CD8-positive, alpha-beta T cell (primary cell): ENCODE measurements at regions of chr19 and their contacts with region 1.

Region 1: DNA sequence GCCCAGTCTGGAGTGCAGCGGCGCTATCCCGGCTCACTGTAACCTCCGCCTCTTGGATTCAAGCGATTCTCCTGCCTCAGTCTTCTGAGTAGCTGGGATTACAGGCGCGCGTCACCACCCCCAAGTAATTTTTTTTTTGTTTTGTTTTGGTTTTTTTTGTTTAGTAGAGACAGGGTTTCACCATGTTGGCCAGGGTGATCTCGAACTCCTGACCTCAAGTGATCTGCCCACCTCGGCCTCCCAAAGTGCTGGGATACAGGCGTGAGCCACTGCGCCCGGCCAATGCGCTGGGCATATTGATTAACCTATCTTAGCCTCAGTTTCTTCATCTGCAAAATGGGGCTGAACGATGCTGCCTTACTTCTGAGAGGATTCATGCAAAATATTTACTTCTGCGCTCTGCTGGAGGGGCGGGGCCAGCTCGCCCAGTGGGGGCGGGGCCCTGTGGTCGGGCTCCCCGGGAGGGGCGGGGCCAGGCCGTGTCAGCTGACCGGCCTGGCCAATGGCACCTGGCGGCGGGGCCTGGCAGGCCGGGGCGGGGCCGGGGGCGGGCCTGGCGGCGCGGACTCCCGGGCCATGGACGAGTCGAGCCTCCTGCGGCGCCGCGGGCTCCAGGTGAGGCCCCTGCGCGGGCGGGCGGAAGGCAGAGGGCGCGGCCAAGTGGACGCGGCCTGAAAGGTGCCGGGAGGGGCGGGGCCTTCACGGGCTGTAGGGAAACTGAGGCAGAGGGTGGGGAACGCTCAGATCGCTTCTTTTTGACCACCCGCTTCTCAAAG is at the start of gene MAST3:
- DNase-seq: peak; percentile 84 to 95 (median 92)
- ATAC-seq: peak; percentile 96
- H3K4me3 ChIP-seq: peak within 1 kb of the TSS; percentile 63 to 66
- H3K4me3 Mint-ChIP-seq: peak within 1 kb of the TSS; percentile 89
- H3K27ac ChIP-seq: peak within 1 kb of the TSS; percentile 26 to 40
- H3K27ac Mint-ChIP-seq: peak within 1 kb of the TSS; percentile 72
- H3K4me1 ChIP-seq: peaks cover 35% of the 10 kb centered on the region
- H3K4me1 Mint-ChIP-seq: peaks cover 47% of the 10 kb centered on the region
- H3K27me3 ChIP-seq: no peaks in the 10 kb centered on the region
- H3K27me3 Mint-ChIP-seq: no peaks in the 10 kb centered on the region
- CTCF ChIP-seq: no peak
- total RNA-seq, gene MAST3: 13.7 to 15.2 TPM

Region 2: GRCh38 chr19:18109733-18110595 is 12.6 kb after region 1 on chr19:
- CTCF ChIA-PET with region 1: interaction called, 14 read pairs
- POLR2A ChIA-PET with region 1: interaction called, 18 read pairs
- intact Hi-C with region 1: no loop called
- DNase-seq: peak in 6 of 9 experiments; percentile 48 to 72 (median 58)
- ATAC-seq: peak; percentile 79
- H3K4me3 ChIP-seq: peak overlapping the region; percentile 74
- H3K4me3 Mint-ChIP-seq: peak overlapping the region; percentile 82
- H3K27ac ChIP-seq: peak overlapping the region; percentile 41 to 53
- H3K27ac Mint-ChIP-seq: peak overlapping the region; percentile 86
- H3K4me1 ChIP-seq: peaks cover 21% of the 10 kb centered on the region
- H3K4me1 Mint-ChIP-seq: peaks cover 18% of the 10 kb centered on the region
- H3K27me3 ChIP-seq: no peaks in the 10 kb centered on the region
- H3K27me3 Mint-ChIP-seq: no peaks in the 10 kb centered on the region
- CTCF ChIP-seq: no peak

Region 3: DNA sequence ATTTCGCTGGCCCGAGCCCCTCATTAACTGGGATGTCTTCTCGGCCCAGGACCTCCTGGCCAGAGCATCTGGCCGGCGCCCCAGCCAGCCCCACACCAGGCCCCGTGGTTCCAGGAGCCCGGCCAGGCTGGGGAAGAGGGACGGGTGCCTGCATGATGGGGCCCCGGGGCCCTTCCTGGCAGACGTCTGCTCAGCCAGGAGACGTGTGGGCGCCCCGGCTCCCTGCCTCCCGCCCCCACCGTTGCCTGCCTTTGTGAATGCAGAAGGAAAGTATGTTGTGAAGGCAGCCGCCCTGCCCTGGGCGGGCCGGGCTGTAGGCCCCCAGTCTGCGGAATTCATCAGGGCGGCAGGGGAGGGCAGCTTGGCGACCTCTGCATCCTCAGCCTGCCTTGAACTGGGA is 698.1 kb after region 1 on chr19:
- CTCF ChIA-PET with region 1: no interaction called
- POLR2A ChIA-PET with region 1: no interaction called
- intact Hi-C with region 1: no loop called
- DNase-seq: no peak
- ATAC-seq: no peak
- H3K4me3 ChIP-seq: no peak overlapping the region
- H3K4me3 Mint-ChIP-seq: no peak overlapping the region
- H3K27ac ChIP-seq: no peak overlapping the region
- H3K27ac Mint-ChIP-seq: no peak overlapping the region
- H3K4me1 ChIP-seq: peaks cover 5% of the 10 kb centered on the region
- H3K4me1 Mint-ChIP-seq: peaks cover 3% of the 10 kb centered on the region
- H3K27me3 ChIP-seq: peaks cover 8 to 24% of the 10 kb centered on the region in 2 experiments
- H3K27me3 Mint-ChIP-seq: peaks cover 41% of the 10 kb centered on the region
- CTCF ChIP-seq: no peak